AG04449 (cell line): ENCODE measurements at regions of chr16 and their contacts with region 1.

Region 1: GRCh38 chr16:22297114-22297878 is at the start of gene POLR3E:
- DNase-seq: peak; percentile 77
- H3K4me3 ChIP-seq: peak within 1 kb of the TSS; percentile 88
- CTCF ChIP-seq: peak; percentile 96

Region 2: DNA sequence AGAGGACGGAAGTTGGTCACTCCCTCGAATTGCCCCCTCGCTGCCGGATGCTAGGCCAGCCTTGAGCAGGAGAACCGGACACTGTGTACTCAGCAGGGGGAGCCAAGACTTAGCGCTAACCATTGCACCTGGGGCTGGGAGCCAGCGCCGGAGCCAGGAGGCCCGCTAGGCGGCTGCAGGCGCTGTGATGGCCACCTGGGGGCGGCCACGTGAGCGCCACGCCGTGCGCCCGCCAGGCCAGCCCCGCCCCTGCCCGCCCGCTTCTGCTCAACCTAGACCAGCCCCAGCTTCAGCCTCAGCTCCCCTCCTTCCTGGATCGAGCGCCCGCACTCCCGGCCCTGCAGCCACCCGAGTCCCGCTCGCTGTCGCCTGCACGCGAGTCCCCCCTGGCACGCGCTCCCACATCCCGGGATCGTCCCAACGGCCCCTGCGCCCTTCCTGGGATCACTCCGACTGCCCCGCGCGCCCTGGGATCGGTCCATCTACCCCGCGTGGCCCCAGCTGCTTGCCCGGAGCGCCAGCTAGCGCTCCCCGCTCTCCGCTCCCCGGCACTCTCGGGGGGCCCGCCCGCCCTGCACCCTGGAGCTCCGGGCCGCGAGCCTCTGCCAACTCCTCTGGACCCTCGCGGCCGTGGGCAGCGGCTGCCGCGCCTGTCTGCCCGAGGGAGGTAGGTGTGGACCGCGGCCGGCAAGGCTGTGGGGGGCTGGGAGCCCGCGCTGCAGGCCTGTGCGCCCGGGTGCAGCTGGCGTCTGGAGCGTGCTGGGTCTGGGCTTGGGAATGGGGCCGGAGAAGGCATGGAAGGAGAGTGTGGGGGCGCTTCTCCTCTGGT is 91.1 kb before region 1 on chr16 and contains the start of gene EEF2K:
- CTCF ChIA-PET with region 1: interaction called, 200 read pairs
- POLR2A ChIA-PET with region 1: no interaction called
- DNase-seq: peak; percentile 61
- H3K4me3 ChIP-seq: peak within 1 kb of the TSS; percentile 81
- CTCF ChIP-seq: peak; percentile 89

Region 3: DNA sequence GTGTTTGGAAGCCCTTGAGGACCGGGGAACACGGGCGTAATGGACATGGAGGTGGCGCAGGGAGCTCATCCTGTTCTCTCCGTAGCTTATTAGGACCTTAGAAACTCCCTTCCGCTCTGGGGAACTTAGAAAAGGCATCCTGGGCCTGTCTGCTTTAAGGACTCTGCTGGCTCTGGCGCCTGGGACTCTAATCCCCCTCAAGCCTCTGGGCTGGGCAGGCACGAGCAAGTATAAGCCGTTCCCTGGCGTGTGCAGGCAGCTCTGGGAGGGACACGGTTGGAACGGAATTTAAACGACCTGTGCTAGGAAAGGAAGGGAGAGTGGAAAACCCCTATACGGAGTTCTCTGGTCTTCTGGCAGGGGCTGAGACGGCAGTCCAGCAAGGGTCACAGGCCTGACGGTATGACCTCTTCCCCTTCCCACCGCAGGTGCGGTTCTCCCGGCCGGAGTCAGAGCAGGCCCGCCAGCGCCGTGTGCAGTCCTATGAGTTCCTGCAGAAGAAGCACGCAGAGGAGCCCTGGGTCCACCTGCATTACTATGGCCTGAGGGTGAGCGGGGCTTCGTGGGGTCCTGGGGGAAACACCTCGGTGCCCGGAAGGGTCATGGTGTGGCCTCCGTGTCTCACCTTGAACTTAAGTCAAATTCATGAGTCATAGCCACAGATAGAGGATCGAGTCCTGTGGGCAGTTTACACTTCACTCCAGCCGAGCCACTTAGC is 17.5 kb after region 1 on chr16:
- CTCF ChIA-PET with region 1: interaction called, 74 read pairs
- POLR2A ChIA-PET with region 1: no interaction called
- DNase-seq: no peak
- H3K4me3 ChIP-seq: no peak overlapping the region
- CTCF ChIP-seq: no peak

Region 4: GRCh38 chr16:22321339-22322001 is 24.2 kb after region 1 on chr16:
- CTCF ChIA-PET with region 1: interaction called, 16 read pairs
- POLR2A ChIA-PET with region 1: no interaction called
- DNase-seq: no peak
- H3K4me3 ChIP-seq: no peak overlapping the region
- CTCF ChIP-seq: peak; percentile 65